ENCODE measurements at regions of chr6 and their contacts with region 1.

Region 1: DNA sequence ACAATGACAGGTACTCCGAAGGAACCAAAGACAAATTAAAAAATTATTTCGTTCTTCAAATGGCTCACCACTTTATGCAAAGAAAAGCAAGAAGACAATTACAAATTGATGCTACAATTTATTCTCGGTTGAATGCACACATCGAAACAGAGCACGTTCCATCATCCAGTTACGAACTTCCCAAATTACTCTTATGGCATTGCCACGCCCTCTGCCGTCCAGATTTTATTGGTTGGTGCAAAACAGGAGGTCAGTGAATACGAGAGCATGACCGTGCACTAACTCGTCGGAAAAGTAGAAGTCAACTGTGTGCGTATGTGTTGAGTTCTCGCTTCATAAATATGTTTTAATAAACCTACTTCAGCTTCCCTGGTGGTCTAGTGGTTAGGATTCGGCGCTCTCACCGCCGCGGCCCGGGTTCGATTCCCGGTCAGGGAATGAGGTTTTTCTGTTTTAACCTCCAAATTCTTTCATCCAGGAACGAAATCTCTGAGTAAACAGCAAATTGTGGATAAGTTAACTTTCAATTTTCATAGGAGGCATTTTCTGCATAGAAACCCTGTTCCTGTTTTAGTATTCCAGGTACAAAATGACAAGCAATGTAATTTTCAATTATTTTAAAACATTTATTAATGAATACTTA is 23.2 kb downstream of the ZNF311 start:
- DNase-seq: peak; percentile 64
- H3K4me3 Mint-ChIP-seq: peak overlapping the region; percentile 89
- H3K27ac Mint-ChIP-seq: peak overlapping the region; percentile 80
- H3K4me1 Mint-ChIP-seq: peaks cover 43% of the 10 kb centered on the region
- H3K27me3 Mint-ChIP-seq: peaks cover 41% of the 10 kb centered on the region

Region 2: DNA sequence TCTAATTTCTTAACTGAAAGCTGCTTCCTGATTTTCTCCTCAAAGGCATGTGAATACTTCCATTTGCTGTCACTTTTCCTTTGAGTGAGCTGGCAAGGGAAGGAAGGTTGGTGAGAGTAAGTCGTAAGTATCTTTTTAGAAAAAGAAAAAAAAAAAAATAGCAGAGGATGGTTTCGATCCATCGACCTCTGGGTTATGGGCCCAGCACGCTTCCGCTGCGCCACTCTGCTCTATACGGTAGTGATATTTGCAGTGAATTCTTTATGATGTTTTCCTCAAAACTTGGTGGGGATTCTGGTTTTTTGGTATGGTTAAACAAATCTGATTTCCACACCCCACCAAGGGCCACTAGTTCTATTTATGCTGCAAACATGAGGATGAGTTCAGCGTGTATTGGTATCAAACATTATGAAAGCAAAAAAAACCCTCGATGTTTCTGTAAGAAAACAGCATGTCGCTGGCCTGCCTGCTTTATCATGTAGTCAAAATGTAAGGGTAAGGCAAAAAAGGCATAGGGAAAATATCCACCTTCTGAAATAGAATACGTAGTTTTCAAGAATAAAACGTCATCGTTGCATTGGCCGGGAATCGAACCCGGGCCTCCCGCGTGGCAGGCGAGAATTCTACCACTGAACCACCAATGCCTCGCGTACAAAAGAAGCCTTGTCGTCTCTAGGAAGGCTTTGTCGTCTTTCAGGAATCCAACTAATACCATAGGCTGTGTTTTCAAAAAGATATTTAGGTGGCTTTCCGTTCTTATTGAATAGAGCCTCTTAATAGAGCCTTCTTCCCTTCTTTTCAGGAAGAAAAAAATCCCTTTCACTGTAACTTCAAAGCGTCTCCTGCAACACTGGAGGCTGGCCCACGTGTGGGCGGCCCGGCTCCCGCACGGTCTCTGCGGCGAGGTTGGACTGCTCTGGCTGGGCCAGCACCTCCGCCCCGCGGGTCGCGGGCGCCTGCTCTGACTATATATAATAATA is 1079.3 kb before region 1 on chr6:
- intact Hi-C with region 1: loop called (anchors 10 kb)
- DNase-seq: peak; percentile 78
- H3K4me3 Mint-ChIP-seq: peak overlapping the region; percentile 82
- H3K27ac Mint-ChIP-seq: peak overlapping the region; percentile 90
- H3K4me1 Mint-ChIP-seq: peaks cover 22% of the 10 kb centered on the region
- H3K27me3 Mint-ChIP-seq: peaks cover 13% of the 10 kb centered on the region

Region 3: DNA sequence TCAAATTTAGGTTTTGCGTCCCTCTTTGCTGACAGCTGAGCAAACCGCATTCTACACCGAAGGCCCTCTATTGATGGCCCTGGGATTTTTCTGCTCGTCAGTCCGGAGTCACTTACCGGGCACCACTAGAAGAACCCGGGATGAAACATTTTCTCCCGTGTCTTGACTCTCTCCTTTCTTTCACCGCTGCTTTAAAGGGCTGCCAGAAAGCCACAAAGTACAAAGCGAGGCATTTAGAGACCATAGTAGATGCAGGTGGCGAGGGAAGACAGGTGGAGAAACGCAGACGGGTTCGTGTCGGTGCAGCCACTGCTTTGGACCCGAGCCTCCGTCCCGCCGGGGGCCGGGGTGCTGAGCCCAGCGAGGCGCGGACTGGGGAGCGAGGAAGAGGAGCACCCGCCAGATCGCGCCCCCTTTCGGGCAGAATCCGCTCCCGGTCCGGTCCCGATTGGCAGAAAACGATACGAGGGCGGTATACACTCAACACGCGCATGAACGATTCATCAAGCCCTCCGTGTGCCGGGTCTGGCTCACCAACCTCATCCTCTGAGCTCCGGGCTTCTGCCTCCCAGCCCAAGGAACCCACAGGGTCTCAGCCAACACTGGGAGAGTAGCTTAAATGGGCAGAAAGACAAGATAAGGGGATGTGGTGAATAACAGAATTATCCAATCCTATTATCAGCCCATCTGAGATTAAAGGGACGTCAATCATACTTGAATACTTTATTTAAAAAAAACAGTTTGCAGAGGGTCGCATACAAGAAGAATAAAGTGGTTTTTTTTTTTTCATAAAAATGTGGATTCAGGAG is 143.1 kb before region 1 on chr6:
- intact Hi-C with region 1: loop called (anchors 1 kb)
- DNase-seq: peak; percentile 75
- H3K4me3 Mint-ChIP-seq: peak overlapping the region; percentile 97
- H3K27ac Mint-ChIP-seq: peak overlapping the region; percentile 79
- H3K4me1 Mint-ChIP-seq: peaks cover 17% of the 10 kb centered on the region
- H3K27me3 Mint-ChIP-seq: peaks cover 43% of the 10 kb centered on the region

Region 4: DNA sequence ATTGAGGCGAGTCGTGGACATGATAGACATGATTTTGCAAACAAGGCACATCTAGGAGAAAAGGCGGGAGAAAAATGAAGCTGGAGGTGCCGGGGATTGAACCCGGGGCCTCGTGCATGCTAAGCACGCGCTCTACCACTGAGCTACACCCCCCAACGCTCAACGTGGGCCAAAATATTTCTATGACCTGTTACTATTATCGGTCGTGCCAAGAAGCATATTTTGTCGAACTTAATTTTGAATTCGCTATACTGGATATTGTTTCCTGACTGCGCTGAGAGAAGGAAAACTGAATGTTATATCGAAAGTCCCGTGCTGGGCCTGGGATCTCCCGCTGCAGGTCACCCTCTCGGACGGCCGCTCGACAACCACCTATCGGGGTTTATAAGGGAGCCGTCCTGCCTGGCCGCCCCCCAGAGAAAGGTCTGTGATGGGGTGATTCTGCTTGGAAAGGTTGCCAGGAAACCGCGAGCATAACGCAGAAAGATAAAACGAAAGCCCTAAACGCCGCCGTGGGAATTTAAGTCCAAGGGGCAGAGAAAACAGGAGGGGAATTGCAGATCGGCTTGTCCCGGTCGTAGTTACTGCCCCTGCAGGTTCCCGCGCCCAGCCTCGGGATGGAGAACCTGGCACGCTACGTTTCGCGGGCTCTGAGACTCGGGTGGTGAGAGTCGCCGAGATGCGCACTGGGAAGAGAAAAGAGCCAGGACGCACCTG is 118.2 kb before region 1 on chr6:
- intact Hi-C with region 1: loop called (anchors 5 kb)
- DNase-seq: peak; percentile 78
- H3K4me3 Mint-ChIP-seq: peak overlapping the region; percentile 93
- H3K27ac Mint-ChIP-seq: peak overlapping the region; percentile 78
- H3K4me1 Mint-ChIP-seq: peaks cover 38% of the 10 kb centered on the region
- H3K27me3 Mint-ChIP-seq: peaks cover 18% of the 10 kb centered on the region

Region 5: DNA sequence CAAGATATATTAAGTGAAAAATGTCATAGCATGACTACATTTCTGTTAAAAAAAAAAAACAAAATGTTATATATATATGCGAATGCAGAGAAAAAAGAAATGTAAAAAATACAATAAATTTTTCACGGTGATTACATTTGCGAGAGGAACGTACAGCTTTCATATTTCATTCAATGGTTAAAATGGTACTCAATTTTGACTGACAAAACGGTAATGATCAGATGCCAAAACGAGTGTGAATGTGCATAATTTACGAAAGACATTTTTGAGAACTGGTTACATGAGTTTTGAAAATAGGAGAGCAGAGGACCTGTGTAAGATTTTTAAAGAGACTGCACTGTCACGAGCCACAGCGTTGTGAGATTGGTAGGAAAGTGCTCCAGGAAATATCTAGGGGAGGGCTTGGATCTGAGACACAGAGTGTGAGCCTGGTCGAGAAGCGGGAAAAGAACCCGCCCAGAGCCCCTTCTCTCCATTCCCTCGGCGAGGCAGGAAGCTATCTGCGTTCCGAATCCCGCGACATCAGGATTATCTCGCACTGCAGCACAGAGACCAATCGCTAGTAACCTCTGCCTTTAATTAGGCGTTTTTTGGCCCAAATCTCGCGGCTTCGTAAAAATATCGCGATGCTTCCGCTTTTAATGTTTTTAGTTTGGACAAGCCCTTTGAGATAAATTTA is 86.7 kb before region 1 on chr6:
- intact Hi-C with region 1: loop called (anchors 1 kb)
- DNase-seq: peak; percentile 90
- H3K4me3 Mint-ChIP-seq: peak overlapping the region; percentile 97
- H3K27ac Mint-ChIP-seq: peak overlapping the region; percentile 100
- H3K4me1 Mint-ChIP-seq: peaks cover 10% of the 10 kb centered on the region
- H3K27me3 Mint-ChIP-seq: peaks cover 3% of the 10 kb centered on the region

Region 6: GRCh38 chr6:28923318-28924102 is 58.4 kb before region 1 on chr6 and contains the start of gene TRIM27:
- intact Hi-C with region 1: loop called (anchors 2 kb)
- DNase-seq: peak; percentile 78
- H3K4me3 Mint-ChIP-seq: peak within 1 kb of the TSS; percentile 93
- H3K27ac Mint-ChIP-seq: peak within 1 kb of the TSS; percentile 88
- H3K4me1 Mint-ChIP-seq: peaks cover 28% of the 10 kb centered on the region
- H3K27me3 Mint-ChIP-seq: no peaks in the 10 kb centered on the region
- total RNA-seq, gene TRIM27: 64.4 and 69.6 TPM in 2 replicates

Region 7: DNA sequence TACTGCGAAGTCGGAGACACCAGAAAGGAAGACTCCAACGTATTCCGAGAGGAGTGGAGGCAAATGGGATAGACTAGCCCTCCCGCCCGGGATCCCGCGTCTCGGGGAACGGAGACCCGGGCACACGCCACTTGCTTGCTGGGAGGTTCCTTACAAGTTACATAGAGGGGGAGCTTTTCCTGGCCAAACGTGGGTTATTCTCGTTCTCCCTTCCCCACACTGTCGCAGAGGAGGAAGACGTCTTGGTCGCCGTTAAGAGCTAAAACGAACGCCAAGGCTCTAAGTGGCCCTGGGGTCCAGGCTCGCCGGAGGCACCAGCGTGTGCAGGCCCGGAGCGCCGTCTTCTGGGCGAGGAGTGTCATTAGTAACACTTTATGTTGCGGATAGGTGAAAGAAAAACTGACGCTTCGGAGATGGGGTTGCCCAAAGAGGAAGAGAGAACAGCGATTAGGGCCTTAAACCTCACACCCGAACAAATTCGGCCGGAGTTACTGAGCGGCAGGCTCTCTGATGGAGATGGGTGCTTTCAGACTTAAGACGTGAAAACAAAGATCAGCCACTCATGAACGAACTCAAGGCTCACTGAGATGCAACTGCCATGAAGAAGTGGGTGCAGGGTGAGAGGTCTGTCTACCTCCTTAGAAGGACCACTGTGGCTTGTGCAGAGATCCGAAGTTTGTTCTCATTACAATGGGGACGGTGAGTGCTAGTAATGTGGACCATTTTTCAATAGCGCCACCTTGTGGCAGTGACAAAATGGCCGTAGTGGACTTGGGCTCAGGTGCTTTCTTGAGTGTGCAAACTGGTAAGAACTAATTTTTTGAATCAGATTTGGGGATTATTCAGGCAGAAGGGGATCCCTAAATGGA is 34.8 kb after region 1 on chr6:
- intact Hi-C with region 1: loop called (anchors 1 kb)
- DNase-seq: peak; percentile 75
- H3K4me3 Mint-ChIP-seq: peak overlapping the region; percentile 81
- H3K27ac Mint-ChIP-seq: peak overlapping the region; percentile 70
- H3K4me1 Mint-ChIP-seq: peaks cover 15% of the 10 kb centered on the region
- H3K27me3 Mint-ChIP-seq: peaks cover 28% of the 10 kb centered on the region

Region 8: GRCh38 chr6:29216528-29216927 is 234.6 kb after region 1 on chr6:
- intact Hi-C with region 1: no loop called
- DNase-seq: no peak
- H3K4me3 Mint-ChIP-seq: no peak overlapping the region
- H3K27ac Mint-ChIP-seq: no peak overlapping the region
- H3K4me1 Mint-ChIP-seq: no peaks in the 10 kb centered on the region
- H3K27me3 Mint-ChIP-seq: peaks cover 4% of the 10 kb centered on the region

Region 9: GRCh38 chr6:29368765-29369164 is 386.8 kb after region 1 on chr6 and contains the start of gene OR5V1:
- intact Hi-C with region 1: no loop called
- DNase-seq: no peak
- H3K4me3 Mint-ChIP-seq: no peak within 1 kb of the TSS
- H3K27ac Mint-ChIP-seq: no peak within 1 kb of the TSS
- H3K4me1 Mint-ChIP-seq: no peaks in the 10 kb centered on the region
- H3K27me3 Mint-ChIP-seq: peaks cover 1% of the 10 kb centered on the region
- total RNA-seq, gene OR5V1: not detected in 2 replicates

Measured in activated T-helper 2 cell treated with anti-CD3 and anti-CD28 coated beads, Interferon-gamma antibody, Interleukin-2, Interleukin-4, amounts not matched to agents 10 μg/mL and 5 μg/mL and 100 μg/mL, durations not matched to agents 14 hours and 24 hours and 36 hours (primary cell).